ENCODE measurements at regions of chr5 and their contacts with region 1.

Region 1: DNA sequence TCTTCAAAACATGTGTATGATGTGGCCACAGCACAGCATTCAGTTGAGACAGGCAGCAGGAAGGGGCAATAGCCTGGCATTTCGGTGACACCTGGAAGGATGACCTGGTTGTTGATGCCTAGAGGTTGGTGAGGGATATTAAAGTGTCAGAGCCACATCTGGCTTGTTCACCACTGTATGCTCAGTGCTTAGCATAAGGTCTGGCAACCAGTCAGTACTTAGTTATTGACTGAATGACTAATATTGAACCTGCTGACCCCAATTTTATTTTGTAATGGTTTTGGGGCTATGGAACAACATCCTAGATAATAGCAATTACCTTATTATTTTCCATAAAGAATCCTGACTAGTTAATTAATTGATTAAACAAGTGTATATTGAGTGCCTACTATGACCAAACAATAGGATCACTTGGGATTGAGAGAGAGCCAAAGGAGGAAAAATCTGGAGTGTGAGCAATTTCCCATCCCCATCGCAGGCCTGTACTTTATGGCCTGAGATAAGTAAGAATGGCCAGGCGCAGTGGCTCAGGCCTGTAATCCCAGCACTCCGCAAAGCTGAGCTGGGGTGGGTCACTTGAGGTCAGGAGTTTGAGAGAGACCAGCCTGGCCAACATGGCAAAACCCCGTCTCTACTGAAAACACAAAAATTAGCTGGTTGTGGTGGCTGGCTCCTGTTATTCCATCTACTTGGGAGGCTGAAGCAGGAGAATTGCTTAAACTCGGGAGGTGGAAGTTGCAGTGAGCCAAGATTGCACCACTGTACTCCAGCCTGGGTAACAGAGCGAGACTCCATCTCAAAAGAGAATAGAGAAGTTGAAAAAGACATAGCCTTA is 85.5 kb upstream of the PLPP1 start:
- DNase-seq: no peak
- ATAC-seq: no peak
- H3K4me3 Mint-ChIP-seq: no peak overlapping the region
- H3K27ac Mint-ChIP-seq: no peak overlapping the region
- H3K4me1 Mint-ChIP-seq: no peaks in the 10 kb centered on the region
- H3K27me3 Mint-ChIP-seq: no peaks in the 10 kb centered on the region

Region 2: GRCh38 chr5:55601204-55601618 is 19.0 kb before region 1 on chr5:
- CTCF ChIA-PET with region 1: no interaction called
- POLR2A ChIA-PET with region 1: no interaction called
- intact Hi-C with region 1: loop called in 1 of 2 experiments (anchors 1 kb)
- DNase-seq: no peak
- ATAC-seq: no peak
- H3K4me3 Mint-ChIP-seq: peak overlapping the region; percentile 35
- H3K27ac Mint-ChIP-seq: peak overlapping the region; percentile 29
- H3K4me1 Mint-ChIP-seq: peaks cover 23% of the 10 kb centered on the region
- H3K27me3 Mint-ChIP-seq: no peaks in the 10 kb centered on the region

Region 3: GRCh38 chr5:56415356-56415765 is 795.1 kb after region 1 on chr5:
- CTCF ChIA-PET with region 1: no interaction called
- POLR2A ChIA-PET with region 1: no interaction called
- intact Hi-C with region 1: no loop called
- DNase-seq: no peak
- ATAC-seq: no peak
- H3K4me3 Mint-ChIP-seq: no peak overlapping the region
- H3K27ac Mint-ChIP-seq: no peak overlapping the region
- H3K4me1 Mint-ChIP-seq: peaks cover 18% of the 10 kb centered on the region
- H3K27me3 Mint-ChIP-seq: no peaks in the 10 kb centered on the region